Right lobe of liver (tissue), 6 donors: ENCODE measurements at regions of chr5 and their contacts with region 1.

Region 1: DNA sequence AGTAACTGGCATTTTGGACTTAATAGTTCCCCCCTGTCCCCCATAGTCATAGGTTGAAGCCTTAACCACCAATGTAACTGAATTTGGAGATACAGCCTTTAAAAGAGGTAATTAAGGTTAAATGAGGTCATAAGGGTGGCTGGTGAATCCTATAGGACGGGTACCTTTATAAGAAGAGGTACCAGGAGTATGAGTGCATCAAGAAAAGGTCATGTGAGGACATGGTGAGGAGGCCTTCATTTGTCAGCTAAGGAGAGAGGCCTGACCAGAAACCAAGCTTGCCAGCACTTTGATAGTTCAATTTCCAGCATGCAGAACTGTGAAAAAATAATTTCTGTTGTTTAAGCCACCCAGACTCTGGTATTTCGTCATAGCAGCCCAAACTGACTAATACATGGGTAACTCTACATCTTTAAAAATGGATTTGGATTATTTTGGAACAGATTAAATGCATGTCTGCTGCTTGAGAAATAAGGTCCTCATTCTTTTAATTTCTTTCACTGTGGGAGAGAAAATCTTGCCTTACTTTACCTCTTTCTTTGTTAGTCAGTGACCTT is 9.7 kb downstream of the RASA1 start:
- DNase-seq: no peak
- ATAC-seq: no peak
- H3K4me3 ChIP-seq: no peak overlapping the region
- H3K27ac ChIP-seq: no peak overlapping the region
- H3K4me1 ChIP-seq: peaks cover 0 to 7% (median 0%) of the 10 kb centered on the region in 4 donors
- H3K27me3 ChIP-seq: no peaks in the 10 kb centered on the region
- CTCF ChIP-seq: no peak
- POLR2A ChIP-seq: no peak

Region 2: GRCh38 chr5:87393331-87393730 is 116.0 kb after region 1 on chr5:
- intact Hi-C with region 1: loop called in 1 of 2 experiments (anchors 10 kb)
- DNase-seq: no peak
- ATAC-seq: no peak
- H3K4me3 ChIP-seq: no peak overlapping the region
- H3K27ac ChIP-seq: no peak overlapping the region
- H3K4me1 ChIP-seq: peaks cover 0 to 53% (median 7%) of the 10 kb centered on the region in 4 donors
- H3K27me3 ChIP-seq: no peaks in the 10 kb centered on the region
- CTCF ChIP-seq: no peak
- POLR2A ChIP-seq: no peak